PC-3 (cell line): ENCODE measurements at regions of chr1 and their contacts with region 1.

Region 1: DNA sequence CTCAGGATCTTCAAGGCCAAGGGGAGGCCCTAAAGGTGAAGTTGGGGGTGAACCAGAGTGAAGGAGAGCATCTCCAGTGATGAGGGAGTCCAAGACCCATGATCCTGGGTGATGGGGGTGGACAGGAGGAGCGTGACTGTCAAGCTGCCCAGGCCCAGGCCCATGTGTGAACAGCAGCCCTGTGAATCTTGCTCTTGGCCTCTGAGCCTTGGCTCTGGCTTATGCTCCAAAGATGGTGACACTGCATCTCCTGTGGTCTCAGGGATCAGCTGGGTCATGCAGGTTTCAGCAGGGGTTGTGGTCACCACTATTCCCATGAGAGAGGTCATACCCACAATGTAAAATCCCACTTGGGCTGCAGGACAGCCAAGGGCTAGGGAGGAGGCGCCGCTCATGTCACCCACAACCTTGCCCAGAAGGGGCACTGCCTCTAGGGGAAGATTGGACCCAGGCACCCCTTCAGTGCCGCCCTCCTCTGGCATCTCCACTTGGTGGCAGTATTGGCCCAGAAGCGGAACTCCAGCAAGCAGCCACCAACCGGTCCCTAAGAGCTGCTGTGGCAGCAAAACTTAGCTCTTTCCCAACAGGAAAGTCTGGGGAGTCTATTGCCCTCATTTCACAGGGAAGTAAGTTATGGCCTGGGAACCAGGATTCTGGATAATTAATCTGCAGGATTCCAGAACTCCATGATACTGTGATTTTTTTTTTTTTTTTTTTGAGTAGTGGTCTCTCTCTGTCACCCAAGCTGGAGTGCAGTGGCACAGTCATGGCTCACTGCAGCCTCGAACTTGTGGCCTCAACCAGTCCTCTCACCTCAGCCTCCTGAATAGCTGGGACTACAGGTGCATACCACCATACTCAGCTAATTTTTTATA is 7.5 kb upstream of the WNT3A start:
- DNase-seq: peak; percentile 97
- ATAC-seq: peak; percentile 96
- H3K4me3 ChIP-seq: no peak overlapping the region
- H3K27ac ChIP-seq: no peak overlapping the region
- H3K4me1 ChIP-seq: no peaks in the 10 kb centered on the region
- H3K27me3 ChIP-seq: no peaks in the 10 kb centered on the region
- CTCF ChIP-seq: peak; percentile 100

Region 2: GRCh38 chr1:227947676-227948492 is 51.4 kb before region 1 on chr1 and contains the start of gene WNT9A:
- CTCF ChIA-PET with region 1: no interaction called
- POLR2A ChIA-PET with region 1: no interaction called
- intact Hi-C with region 1: no loop called
- DNase-seq: peak; percentile 91
- ATAC-seq: peak; percentile 34
- H3K4me3 ChIP-seq: peak within 1 kb of the TSS; percentile 75
- H3K27ac ChIP-seq: peak within 1 kb of the TSS; percentile 77
- H3K4me1 ChIP-seq: peaks cover 28% of the 10 kb centered on the region
- H3K27me3 ChIP-seq: no peaks in the 10 kb centered on the region
- CTCF ChIP-seq: no peak; the same call in 1 of the 2 replicates
- total RNA-seq, gene WNT9A: 22.2 and 36.6 TPM in 2 replicates

Region 3: DNA sequence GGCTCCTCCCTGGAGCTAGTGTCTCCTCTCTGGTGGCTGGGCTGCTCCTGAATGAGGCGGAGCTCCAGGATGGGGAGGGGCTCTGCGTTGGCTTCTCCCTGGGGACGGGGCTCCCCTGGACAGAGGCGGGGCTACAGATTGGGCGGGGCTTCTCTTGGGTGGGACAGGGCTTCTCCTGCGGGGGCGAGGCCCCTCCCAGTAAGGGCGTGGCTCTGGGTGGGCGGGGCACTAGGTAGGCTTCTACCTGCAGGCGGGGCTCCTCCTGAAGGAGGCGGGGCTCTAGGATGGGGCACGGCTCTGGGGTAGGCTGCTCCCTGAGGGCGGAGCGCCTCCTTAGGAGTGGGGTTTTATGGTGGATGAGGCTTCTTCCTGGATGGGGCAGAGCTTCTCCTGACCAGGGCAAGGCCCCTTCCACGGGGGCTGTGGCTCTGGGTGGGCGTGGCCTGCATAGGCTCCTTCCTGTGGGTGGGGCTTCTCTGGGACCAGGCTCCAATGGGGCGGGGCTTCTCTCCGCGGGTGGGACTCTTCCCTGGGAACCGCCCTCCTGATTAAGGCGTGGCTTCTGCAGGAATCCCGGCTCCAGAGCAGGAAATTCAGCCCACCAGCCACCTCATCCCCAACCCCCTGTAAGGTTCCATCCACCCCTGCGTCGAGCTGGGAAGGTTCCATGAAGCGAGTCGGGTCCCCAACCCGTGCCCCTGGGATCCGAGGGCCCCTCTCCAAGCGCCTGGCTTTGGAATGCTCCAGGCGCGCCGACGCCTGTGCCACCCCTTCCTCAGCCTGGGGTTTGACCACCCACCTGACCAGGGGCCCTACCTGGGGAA is 60.6 kb after region 1 on chr1:
- CTCF ChIA-PET with region 1: interaction called, 13 read pairs
- POLR2A ChIA-PET with region 1: interaction called, 3 read pairs
- intact Hi-C with region 1: loop called (anchors 5 kb)
- DNase-seq: peak; percentile 94
- ATAC-seq: peak; percentile 68
- H3K4me3 ChIP-seq: peak overlapping the region; percentile 58
- H3K27ac ChIP-seq: no peak overlapping the region
- H3K4me1 ChIP-seq: peaks cover 8% of the 10 kb centered on the region; the same call in 1 of the 2 replicates
- H3K27me3 ChIP-seq: no peaks in the 10 kb centered on the region
- CTCF ChIP-seq: no peak

Region 4: DNA sequence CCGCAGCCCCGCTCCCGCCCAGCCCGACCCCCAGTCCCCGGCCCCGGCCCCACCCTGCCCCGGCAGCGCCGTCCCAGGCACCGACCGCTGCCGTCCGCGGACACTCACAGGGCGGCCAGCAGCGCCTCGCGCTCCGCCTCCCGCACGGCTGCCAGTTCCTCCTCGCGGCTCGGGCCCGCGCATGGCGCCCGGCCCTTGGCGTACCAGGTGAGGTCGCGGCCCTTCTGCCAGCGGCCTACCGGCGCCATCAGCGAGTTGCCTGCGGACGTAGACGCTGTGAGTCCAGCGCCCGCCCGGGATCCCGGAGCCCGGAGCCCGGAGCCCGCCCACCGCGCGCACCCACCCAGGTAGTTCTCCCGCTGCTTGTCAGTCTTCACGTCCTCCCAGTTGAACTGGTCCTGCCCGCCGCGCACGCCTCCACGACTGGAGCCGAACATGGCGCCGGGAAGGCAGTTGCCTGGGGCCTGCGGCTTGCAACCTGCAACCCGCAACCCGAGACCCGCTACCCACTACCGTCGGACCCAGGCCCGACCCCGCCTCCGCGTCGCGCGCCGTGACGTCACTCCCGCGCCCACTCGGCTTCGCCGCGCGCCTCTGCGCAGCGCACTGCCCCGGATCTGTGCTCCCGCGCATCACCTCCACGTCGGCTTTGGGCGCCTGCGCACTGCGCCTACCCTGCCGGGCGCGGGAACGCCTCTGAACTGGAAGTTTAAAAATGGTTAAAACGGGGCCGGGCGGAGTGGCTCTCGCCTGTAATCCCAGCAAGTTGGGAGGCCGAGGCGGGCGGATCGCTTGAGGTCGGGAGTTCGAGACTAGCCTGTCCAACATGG is 103.7 kb after region 1 on chr1 and contains the start of gene C1orf35:
- CTCF ChIA-PET with region 1: interaction called, 15 read pairs
- POLR2A ChIA-PET with region 1: interaction called, 4 read pairs
- intact Hi-C with region 1: loop called (anchors 1 kb)
- DNase-seq: peak; percentile 100
- ATAC-seq: peak; percentile 71
- H3K4me3 ChIP-seq: peak within 1 kb of the TSS; percentile 79
- H3K27ac ChIP-seq: peak within 1 kb of the TSS; percentile 42
- H3K4me1 ChIP-seq: peaks cover 27% of the 10 kb centered on the region
- H3K27me3 ChIP-seq: no peaks in the 10 kb centered on the region
- CTCF ChIP-seq: no peak
- total RNA-seq, gene C1orf35: 63.3 and 93.0 TPM in 2 replicates

Region 5: GRCh38 chr1:228154021-228154669 is 154.9 kb after region 1 on chr1:
- CTCF ChIA-PET with region 1: interaction called, 11 read pairs
- POLR2A ChIA-PET with region 1: no interaction called
- intact Hi-C with region 1: no loop called
- DNase-seq: no peak
- ATAC-seq: no peak
- H3K4me3 ChIP-seq: no peak overlapping the region
- H3K27ac ChIP-seq: no peak overlapping the region
- H3K4me1 ChIP-seq: no peaks in the 10 kb centered on the region
- H3K27me3 ChIP-seq: no peaks in the 10 kb centered on the region
- CTCF ChIP-seq: no peak

Region 6: GRCh38 chr1:228515200-228515834 is 516.0 kb after region 1 on chr1:
- CTCF ChIA-PET with region 1: no interaction called
- POLR2A ChIA-PET with region 1: no interaction called
- intact Hi-C with region 1: loop called (anchors 2 kb)
- DNase-seq: peak; percentile 68
- ATAC-seq: peak; percentile 59
- H3K4me3 ChIP-seq: no peak overlapping the region
- H3K27ac ChIP-seq: no peak overlapping the region
- H3K4me1 ChIP-seq: no peaks in the 10 kb centered on the region
- H3K27me3 ChIP-seq: peaks cover 42% of the 10 kb centered on the region
- CTCF ChIP-seq: peak; percentile 90